Activated naive CD4-positive, alpha-beta T cell treated with anti-CD3 and anti-CD28 coated beads, Interleukin-2, amount 10 ng/mL, durations not matched to agents 7 days and 5 days (primary cell): ENCODE measurements at regions of chr7 and their contacts with region 1.

Region 1: DNA sequence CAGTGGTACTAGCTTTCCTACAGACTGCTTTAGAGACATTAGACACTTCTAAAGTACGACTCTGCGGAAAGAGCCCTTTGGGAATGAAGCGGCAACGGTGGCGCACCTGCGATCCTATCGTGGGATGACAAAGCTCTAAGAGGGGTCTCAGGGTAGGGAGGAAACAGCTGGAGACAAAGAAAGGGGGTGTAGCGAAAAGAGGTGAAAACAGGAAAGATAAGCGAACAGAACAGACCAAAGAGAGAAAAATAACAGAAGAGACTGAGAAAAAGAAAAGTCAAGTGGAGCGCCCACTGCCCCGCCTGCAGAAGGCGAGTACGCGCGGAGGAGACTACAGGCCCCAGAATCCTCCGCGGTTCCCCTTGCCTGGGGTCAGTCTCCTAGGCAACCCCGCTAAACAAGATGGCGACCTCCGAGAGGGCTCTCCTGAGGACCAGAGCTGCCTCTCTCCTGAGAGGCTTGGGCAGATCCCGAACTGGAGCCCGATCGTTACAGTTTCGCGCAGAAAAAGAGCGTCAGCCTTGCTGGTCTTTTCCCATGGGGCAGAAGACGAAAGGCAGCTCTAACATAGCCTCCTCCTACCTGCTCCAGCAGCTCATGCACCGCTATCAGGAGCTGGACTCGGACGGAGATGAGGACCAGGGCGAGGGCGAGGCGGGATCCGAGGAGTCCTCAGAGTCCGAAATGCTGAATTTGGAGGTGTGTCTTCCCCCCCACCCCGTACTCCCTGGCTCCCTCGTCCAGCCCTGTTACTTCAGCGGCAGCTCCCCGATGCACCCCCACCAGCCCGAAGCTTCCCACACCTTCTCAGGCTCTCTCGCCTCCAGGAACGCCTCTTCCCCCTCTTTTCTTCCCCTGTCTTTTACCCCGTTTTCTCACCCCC is at the start of gene LRGUK:
- DNase-seq: peak; percentile 89
- H3K4me3 Mint-ChIP-seq: peak within 1 kb of the TSS; percentile 80
- H3K27ac Mint-ChIP-seq: no peak within 1 kb of the TSS
- H3K4me1 Mint-ChIP-seq: peaks cover 17% of the 10 kb centered on the region
- H3K27me3 Mint-ChIP-seq: peaks cover 19% of the 10 kb centered on the region

Region 2: DNA sequence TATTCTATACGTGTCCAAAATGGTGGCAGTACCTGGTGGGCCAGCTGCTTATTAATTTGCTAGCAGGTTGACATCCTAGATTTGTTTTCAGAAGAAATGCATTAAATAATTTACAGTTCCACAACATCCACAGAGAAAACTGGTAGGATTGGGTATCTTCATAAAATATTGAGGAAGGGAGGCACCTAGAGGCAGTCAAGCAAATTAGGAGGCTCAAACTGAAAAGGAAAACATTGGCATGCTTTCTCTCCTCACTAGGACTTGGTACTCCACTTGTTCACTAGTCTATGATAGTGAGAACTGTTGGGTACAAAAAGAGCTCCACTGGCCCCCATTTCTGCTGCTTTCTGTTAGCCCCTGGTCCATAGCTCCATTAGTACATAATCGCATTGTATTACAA is 18.4 kb before region 1 on chr7:
- CTCF ChIA-PET with region 1: no interaction called
- DNase-seq: no peak
- H3K4me3 Mint-ChIP-seq: no peak overlapping the region
- H3K27ac Mint-ChIP-seq: no peak overlapping the region
- H3K4me1 Mint-ChIP-seq: no peaks in the 10 kb centered on the region
- H3K27me3 Mint-ChIP-seq: no peaks in the 10 kb centered on the region

Region 3: GRCh38 chr7:134140889-134141867 is 14.0 kb after region 1 on chr7:
- CTCF ChIA-PET with region 1: interaction called, 10 read pairs
- DNase-seq: peak; percentile 63
- H3K4me3 Mint-ChIP-seq: no peak overlapping the region
- H3K27ac Mint-ChIP-seq: no peak overlapping the region
- H3K4me1 Mint-ChIP-seq: peaks cover 3% of the 10 kb centered on the region
- H3K27me3 Mint-ChIP-seq: peaks cover 6% of the 10 kb centered on the region